Gastrocnemius medialis (tissue), 4 donors: ENCODE measurements at regions of chr12 and their contacts with region 1.

Region 1: DNA sequence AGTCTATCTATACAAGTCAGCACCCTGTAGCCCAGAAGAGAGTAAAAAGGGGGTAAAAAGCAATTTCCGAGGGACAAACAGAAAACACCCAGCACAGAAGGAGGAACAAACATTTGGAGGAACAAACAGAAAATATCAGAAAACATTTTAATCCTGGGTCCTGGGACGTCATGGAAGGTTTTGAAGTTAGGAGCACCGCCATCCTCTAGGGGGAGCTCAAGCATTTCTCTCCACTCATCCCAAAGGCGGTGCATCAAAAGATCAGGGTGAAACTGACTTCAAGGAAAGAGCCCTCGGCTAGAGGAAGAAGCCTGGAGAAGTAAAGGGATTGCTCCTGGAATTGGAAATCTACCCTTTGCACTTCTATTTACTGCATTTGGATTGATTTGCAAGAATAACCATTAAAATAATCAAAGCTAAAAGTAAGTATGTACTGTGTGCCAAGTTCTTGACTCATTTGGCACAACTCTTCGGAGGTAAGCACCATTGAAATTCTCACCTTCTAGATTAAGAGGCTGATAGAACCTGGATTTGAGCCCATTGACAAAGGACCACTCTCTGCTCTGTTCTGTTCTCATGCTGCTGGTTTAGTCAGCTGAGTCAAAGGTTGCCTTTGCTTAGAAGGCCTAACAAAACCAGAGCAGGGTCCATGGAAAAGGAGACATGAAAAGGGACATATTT is 17.2 kb upstream of the POC1B start:
- DNase-seq: peak; percentile 26 to 45
- ATAC-seq: peak; percentile 61 to 80
- H3K4me3 ChIP-seq: peak overlapping the region in 1 of 4 donors; percentile 13
- H3K27ac ChIP-seq: no peak overlapping the region
- H3K4me1 ChIP-seq: peaks cover 7 to 29% of the 10 kb centered on the region in 2 donors
- H3K27me3 ChIP-seq: no peaks in the 10 kb centered on the region
- CTCF ChIP-seq: peak; percentile 59 to 86 (median 67)
- POLR2A ChIP-seq: no peak

Region 2: GRCh38 chr12:89695100-89695499 is 152.0 kb after region 1 on chr12:
- in situ Hi-C with region 1: no loop called
- intact Hi-C with region 1: loop called (anchors 5 kb)
- DNase-seq: peak; percentile 38 to 46
- ATAC-seq: peak; percentile 100
- H3K4me3 ChIP-seq: peak overlapping the region in 3 of 4 donors; percentile 26 to 30 (median 30)
- H3K27ac ChIP-seq: peak overlapping the region; percentile 50 to 83 (median 75)
- H3K4me1 ChIP-seq: peaks cover 24 to 58% of the 10 kb centered on the region in 2 donors
- H3K27me3 ChIP-seq: no peaks in the 10 kb centered on the region
- CTCF ChIP-seq: no peak
- POLR2A ChIP-seq: peak; percentile 42 to 73

Region 3: GRCh38 chr12:89742337-89743022 is 199.4 kb after region 1 on chr12:
- in situ Hi-C with region 1: no loop called
- intact Hi-C with region 1: no loop called
- DNase-seq: no peak
- ATAC-seq: no peak
- H3K4me3 ChIP-seq: no peak overlapping the region
- H3K27ac ChIP-seq: no peak overlapping the region
- H3K4me1 ChIP-seq: no peaks in the 10 kb centered on the region
- H3K27me3 ChIP-seq: no peaks in the 10 kb centered on the region
- CTCF ChIP-seq: no peak
- POLR2A ChIP-seq: no peak

Region 4: DNA sequence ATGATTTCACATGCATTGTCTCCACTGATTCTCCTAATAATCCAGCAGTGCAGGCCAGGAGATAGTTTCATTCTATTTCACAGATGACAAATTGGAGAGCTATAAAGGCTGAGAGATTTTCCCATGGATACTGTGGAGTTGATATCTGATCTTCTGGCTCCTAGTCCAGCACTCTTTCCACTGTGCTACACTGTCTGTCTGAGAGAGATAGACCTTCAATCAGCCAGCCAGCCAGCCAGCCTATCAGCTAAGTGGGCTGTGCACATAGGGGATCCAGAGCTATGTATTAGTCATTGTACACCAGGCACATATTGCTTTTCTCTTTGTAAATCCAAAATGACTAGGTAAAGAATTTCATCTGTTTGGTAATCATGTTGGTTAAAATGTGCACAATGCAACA is 257.4 kb after region 1 on chr12:
- in situ Hi-C with region 1: no loop called
- intact Hi-C with region 1: no loop called
- DNase-seq: no peak
- ATAC-seq: no peak
- H3K4me3 ChIP-seq: no peak overlapping the region
- H3K27ac ChIP-seq: no peak overlapping the region
- H3K4me1 ChIP-seq: no peaks in the 10 kb centered on the region
- H3K27me3 ChIP-seq: no peaks in the 10 kb centered on the region
- CTCF ChIP-seq: no peak
- POLR2A ChIP-seq: no peak

Region 5: GRCh38 chr12:90102957-90103652 is 560.1 kb after region 1 on chr12:
- in situ Hi-C with region 1: loop called in 2 of 4 experiments (anchors 10 kb)
- intact Hi-C with region 1: no loop called
- DNase-seq: no peak
- ATAC-seq: no peak
- H3K4me3 ChIP-seq: no peak overlapping the region
- H3K27ac ChIP-seq: no peak overlapping the region
- H3K4me1 ChIP-seq: no peaks in the 10 kb centered on the region
- H3K27me3 ChIP-seq: no peaks in the 10 kb centered on the region
- CTCF ChIP-seq: peak in 2 of 5 experiments; percentile 28 to 40
- POLR2A ChIP-seq: no peak

Region 6: DNA sequence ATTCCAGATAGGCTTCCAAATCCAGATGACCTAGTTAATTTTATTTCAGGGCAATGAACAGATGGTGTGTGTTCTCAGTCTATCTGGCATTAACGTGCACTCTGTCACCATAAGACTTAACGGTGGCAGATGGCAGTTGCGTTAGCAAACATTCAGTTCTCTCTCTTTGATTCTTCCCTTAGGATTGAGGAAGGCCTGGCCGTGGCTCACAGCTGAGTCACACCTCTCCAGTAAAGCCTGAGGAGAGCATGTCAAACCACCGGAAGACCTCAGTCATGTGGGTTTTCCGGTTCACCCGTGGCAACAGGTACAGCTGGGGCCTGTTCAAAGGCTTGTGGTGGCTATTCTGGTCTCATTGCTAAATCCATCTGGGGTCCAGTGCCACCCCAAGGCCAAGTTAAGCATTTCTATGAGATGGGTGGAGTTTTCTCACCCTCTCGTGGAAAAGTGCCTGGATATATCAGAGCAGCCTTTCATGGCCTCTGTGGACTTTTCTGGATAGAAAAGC is 710.7 kb after region 1 on chr12:
- in situ Hi-C with region 1: no loop called
- intact Hi-C with region 1: loop called (anchors 5 kb)
- DNase-seq: peak; percentile 87 to 89
- ATAC-seq: peak; percentile 94 to 96
- H3K4me3 ChIP-seq: no peak overlapping the region
- H3K27ac ChIP-seq: peak overlapping the region; percentile 75 to 88 (median 78)
- H3K4me1 ChIP-seq: peaks cover 40 to 52% of the 10 kb centered on the region in 2 donors
- H3K27me3 ChIP-seq: no peaks in the 10 kb centered on the region
- CTCF ChIP-seq: peak in 2 of 5 experiments; percentile 27 to 39
- POLR2A ChIP-seq: no peak

Region 7: GRCh38 chr12:90959538-90960139 is 1416.6 kb after region 1 on chr12:
- in situ Hi-C with region 1: loop called in 2 of 4 experiments (anchors 10 to 25 kb)
- intact Hi-C with region 1: loop called (anchors 5 kb)
- DNase-seq: no peak
- ATAC-seq: peak in 1 of 2 donors; percentile 58
- H3K4me3 ChIP-seq: no peak overlapping the region
- H3K27ac ChIP-seq: no peak overlapping the region
- H3K4me1 ChIP-seq: no peaks in the 10 kb centered on the region
- H3K27me3 ChIP-seq: no peaks in the 10 kb centered on the region
- CTCF ChIP-seq: peak in 4 of 5 experiments; percentile 41 to 67 (median 54)
- POLR2A ChIP-seq: no peak